ENCODE measurements at regions of chr1 and their contacts with region 1.

Region 1: GRCh38 chr1:146019231-146020057 is 2.1 kb downstream of the HJV start:
- DNase-seq: no peak
- H3K4me3 ChIP-seq: peak overlapping the region in 1 of 3 experiments; percentile 49
- H3K4me3 Mint-ChIP-seq: peak overlapping the region; percentile 66 to 75
- H3K27ac ChIP-seq: no peak overlapping the region
- H3K27ac Mint-ChIP-seq: peak overlapping the region in 1 of 7 donors; percentile 24
- H3K4me1 ChIP-seq: peaks cover 15 to 17% of the 10 kb centered on the region in 2 donors
- H3K4me1 Mint-ChIP-seq: peaks cover 17% of the 10 kb centered on the region
- H3K27me3 ChIP-seq: peaks cover 17 to 23% of the 10 kb centered on the region in 2 donors
- H3K27me3 Mint-ChIP-seq: peaks cover 32 to 41% (median 35%) of the 10 kb centered on the region in 3 donors
- CTCF ChIP-seq: no peak

Region 2: GRCh38 chr1:145706086-145706680 is 313.3 kb before region 1 on chr1:
- intact Hi-C with region 1: no loop called
- DNase-seq: no peak
- H3K4me3 ChIP-seq: no peak overlapping the region
- H3K4me3 Mint-ChIP-seq: no peak overlapping the region
- H3K27ac ChIP-seq: no peak overlapping the region
- H3K27ac Mint-ChIP-seq: no peak overlapping the region
- H3K4me1 ChIP-seq: no peaks in the 10 kb centered on the region
- H3K4me1 Mint-ChIP-seq: no peaks in the 10 kb centered on the region
- H3K27me3 ChIP-seq: no peaks in the 10 kb centered on the region
- H3K27me3 Mint-ChIP-seq: peaks cover 0 to 3% (median 0%) of the 10 kb centered on the region in 3 donors
- CTCF ChIP-seq: no peak

Region 3: GRCh38 chr1:145845514-145846161 is 173.8 kb before region 1 on chr1 and contains the start of gene NUDT17:
- intact Hi-C with region 1: loop called in 1 of 2 experiments (anchors 5 kb)
- DNase-seq: peak; percentile 64 to 72 (median 71)
- H3K4me3 ChIP-seq: peak within 1 kb of the TSS; percentile 72 to 98 (median 88)
- H3K4me3 Mint-ChIP-seq: no peak within 1 kb of the TSS
- H3K27ac ChIP-seq: peak within 1 kb of the TSS; percentile 63 to 90
- H3K27ac Mint-ChIP-seq: peak within 1 kb of the TSS in 3 of 7 donors; percentile 21 to 69 (median 58)
- H3K4me1 ChIP-seq: peaks cover 19 to 25% of the 10 kb centered on the region in 2 donors
- H3K4me1 Mint-ChIP-seq: peaks cover 6% of the 10 kb centered on the region
- H3K27me3 ChIP-seq: no peaks in the 10 kb centered on the region
- H3K27me3 Mint-ChIP-seq: peaks cover 0 to 3% (median 0%) of the 10 kb centered on the region in 3 donors
- CTCF ChIP-seq: peak; percentile 91
- polyA plus RNA-seq, gene NUDT17: 2.1 to 6.4 (median 3.1) TPM

Region 4: GRCh38 chr1:145863282-145864018 is 156.0 kb before region 1 on chr1:
- intact Hi-C with region 1: no loop called
- DNase-seq: no peak
- H3K4me3 ChIP-seq: no peak overlapping the region
- H3K4me3 Mint-ChIP-seq: no peak overlapping the region
- H3K27ac ChIP-seq: no peak overlapping the region
- H3K27ac Mint-ChIP-seq: no peak overlapping the region
- H3K4me1 ChIP-seq: peaks cover 6 to 8% of the 10 kb centered on the region in 2 donors
- H3K4me1 Mint-ChIP-seq: peaks cover 8% of the 10 kb centered on the region
- H3K27me3 ChIP-seq: no peaks in the 10 kb centered on the region
- H3K27me3 Mint-ChIP-seq: peaks cover 2 to 8% (median 2%) of the 10 kb centered on the region in 3 donors
- CTCF ChIP-seq: no peak

Region 5: DNA sequence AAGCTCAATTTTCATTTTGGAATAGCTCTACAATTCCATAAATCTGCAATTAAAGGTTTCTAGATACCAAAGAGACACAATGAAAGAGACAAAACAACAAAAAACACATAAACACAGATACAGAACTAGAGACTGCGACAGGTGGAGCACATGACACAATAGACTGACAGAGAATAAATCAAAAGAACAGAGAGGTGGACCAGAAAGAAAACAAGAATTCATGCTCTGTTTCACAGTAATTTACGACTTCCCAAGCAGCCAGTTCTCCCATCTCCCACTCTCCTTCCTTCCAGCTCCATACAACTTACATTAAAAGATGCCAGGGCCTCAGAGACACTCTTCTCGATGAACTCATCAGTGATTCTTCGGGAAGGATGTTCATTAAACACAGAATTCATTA is 77.0 kb before region 1 on chr1:
- intact Hi-C with region 1: no loop called
- DNase-seq: no peak
- H3K4me3 ChIP-seq: no peak overlapping the region
- H3K4me3 Mint-ChIP-seq: no peak overlapping the region
- H3K27ac ChIP-seq: no peak overlapping the region
- H3K27ac Mint-ChIP-seq: no peak overlapping the region
- H3K4me1 ChIP-seq: no peaks in the 10 kb centered on the region
- H3K4me1 Mint-ChIP-seq: no peaks in the 10 kb centered on the region
- H3K27me3 ChIP-seq: no peaks in the 10 kb centered on the region
- H3K27me3 Mint-ChIP-seq: peaks cover 0 to 3% (median 0%) of the 10 kb centered on the region in 3 donors
- CTCF ChIP-seq: no peak

Region 6: DNA sequence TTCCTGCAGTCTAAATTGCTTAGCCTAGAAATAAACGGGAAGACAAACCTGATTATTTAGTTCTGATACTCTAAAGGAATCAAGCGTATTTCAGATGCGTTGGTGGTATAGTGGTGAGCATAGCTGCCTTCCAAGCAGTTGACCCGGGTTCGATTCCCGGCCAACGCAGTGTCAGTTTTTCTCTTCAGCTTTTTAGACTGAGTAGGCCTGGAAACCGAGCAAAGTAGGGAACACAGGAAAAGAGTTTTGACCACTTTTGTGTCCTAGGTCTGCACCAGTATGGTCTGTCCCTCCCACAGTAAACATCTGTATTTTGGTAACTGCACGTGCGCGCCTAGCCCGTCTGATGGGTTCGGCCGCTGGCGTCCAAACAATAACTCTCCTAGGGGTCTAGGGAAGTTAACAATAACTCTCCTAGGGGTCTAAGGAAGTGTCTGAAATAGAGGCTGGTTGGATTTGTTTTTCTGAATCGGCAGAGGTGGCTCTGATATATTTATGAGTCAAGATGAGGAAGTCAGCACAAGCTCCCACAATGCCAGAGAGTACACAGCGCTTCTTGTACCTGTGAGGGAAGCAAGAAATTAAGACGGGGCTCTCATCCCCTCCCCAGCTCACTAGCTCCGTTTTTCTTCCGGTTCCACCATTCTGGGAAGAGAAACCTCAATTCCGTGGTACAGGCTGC is 17.7 kb after region 1 on chr1:
- intact Hi-C with region 1: loop called in 1 of 2 experiments (anchors 2 kb)
- DNase-seq: peak; percentile 48 to 77 (median 71)
- H3K4me3 ChIP-seq: peak overlapping the region; percentile 43 to 75 (median 50)
- H3K4me3 Mint-ChIP-seq: peak overlapping the region; percentile 97
- H3K27ac ChIP-seq: peak overlapping the region; percentile 15 to 46
- H3K27ac Mint-ChIP-seq: peak overlapping the region; percentile 73 to 89 (median 84)
- H3K4me1 ChIP-seq: peaks cover 50 to 56% of the 10 kb centered on the region in 2 donors
- H3K4me1 Mint-ChIP-seq: peaks cover 51% of the 10 kb centered on the region
- H3K27me3 ChIP-seq: peaks cover 0 to 10% of the 10 kb centered on the region in 2 donors
- H3K27me3 Mint-ChIP-seq: peaks cover 15 to 31% (median 18%) of the 10 kb centered on the region in 3 donors
- CTCF ChIP-seq: no peak

Measured in CD14-positive monocyte (primary cell).